Naive thymus-derived CD8-positive, alpha-beta T cell (primary cell): ENCODE measurements at regions of chr7 and their contacts with region 1.

Region 1: DNA sequence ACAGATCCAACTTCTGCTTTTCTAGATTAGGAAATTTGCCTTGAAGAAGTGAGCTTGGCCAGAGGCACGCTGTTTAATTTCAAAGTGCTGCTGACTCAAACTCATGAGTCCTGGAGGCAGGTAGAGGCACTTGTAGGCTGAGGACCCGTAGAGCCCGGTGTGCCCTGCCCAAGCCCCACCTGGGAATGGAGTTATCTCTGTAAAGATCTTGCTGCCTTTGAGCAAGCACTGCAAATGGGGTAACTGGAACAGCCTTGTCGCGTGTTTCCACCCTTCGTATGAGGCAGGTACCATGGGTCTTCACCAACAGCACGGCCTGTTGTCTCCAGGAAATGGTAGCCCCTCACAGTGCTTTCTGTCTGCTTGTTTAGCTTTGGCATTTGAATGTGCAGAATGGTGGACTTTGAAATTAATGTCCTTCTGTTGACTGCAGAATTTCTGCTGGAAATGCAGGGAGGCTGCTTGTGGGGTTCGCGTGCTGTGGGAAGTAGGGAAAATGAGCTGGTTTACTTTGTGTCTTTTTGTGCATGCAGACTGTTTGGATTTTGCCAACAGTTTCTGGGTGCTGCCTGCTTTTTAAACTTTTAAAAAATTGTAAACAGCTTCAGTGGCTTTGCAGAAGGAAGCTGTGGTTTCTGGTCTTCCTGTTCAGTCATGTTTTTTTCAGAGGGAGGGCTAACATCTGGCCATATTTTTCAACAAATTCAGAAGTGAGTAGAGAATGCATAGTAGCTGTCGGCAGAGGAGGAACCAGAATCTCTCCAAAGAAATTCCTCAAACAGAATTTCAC is 27.2 kb downstream of the CCM2 start:
- DNase-seq: peak in 9 of 10 donors; percentile 12 to 78 (median 44)
- ATAC-seq: peak; percentile 64 to 66
- H3K4me3 Mint-ChIP-seq: peak overlapping the region; percentile 88 to 97 (median 93)
- H3K27ac Mint-ChIP-seq: peak overlapping the region; percentile 89 to 99 (median 92)
- H3K4me1 Mint-ChIP-seq: peaks cover 21 to 72% (median 60%) of the 10 kb centered on the region in 4 donors
- H3K27me3 Mint-ChIP-seq: no peaks in the 10 kb centered on the region

Region 2: DNA sequence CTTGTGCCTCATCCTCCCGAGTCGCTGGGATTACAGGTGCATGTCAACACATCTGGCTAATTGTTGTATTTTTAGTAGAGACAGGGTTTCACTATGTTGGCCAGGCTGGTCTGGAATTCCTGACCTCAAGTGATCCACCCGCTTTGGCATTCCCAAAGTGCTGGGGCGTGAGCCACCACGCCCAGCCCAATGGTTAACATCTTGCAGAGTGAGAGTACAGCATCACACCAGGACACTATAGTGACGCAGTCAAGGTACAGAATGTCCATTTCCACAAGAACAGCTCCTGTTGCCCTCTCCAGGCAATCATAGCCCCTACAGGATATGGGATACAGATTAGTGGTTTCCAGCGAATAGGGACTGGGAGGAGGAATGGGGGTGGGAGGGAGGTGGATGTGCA is 82.4 kb before region 1 on chr7:
- POLR2A ChIA-PET with region 1: no interaction called
- DNase-seq: no peak
- ATAC-seq: no peak
- H3K4me3 Mint-ChIP-seq: no peak overlapping the region
- H3K27ac Mint-ChIP-seq: no peak overlapping the region
- H3K4me1 Mint-ChIP-seq: no peaks in the 10 kb centered on the region
- H3K27me3 Mint-ChIP-seq: peaks cover 0 to 3% (median 0%) of the 10 kb centered on the region in 5 donors

Region 3: DNA sequence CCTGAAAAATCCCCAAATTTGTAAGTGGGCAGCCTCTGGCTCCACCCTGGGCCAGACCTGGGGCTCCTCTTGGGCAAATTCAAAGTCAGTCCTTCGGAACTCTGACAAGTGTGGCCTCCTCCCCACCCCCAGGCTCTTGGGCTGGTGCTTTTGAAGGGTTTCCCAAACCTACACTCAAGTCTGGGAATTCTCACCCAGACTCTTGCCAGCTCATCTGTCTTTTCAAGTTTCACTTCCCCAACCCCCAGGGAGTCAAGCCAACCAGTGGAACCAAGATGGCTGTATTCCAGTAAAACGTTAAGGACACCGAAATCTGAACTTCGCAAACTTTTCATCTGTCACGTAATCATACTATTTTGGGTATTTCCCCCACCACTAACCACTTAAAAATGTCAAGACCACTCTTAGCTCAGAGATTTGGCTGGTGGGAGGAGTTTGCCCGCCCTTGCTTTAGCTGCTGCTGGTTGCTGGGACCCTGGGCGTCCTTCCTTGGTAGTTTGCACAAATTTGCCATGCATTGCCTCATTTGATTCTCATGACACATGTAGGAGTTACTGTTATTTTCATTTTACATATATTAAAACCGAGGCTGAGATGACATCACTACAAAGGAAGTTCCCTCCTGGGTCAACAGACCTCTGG is 46.7 kb before region 1 on chr7:
- POLR2A ChIA-PET with region 1: interaction called, 207 read pairs
- DNase-seq: peak in 9 of 10 donors; percentile 21 to 71 (median 53)
- ATAC-seq: peak; percentile 29 to 39
- H3K4me3 Mint-ChIP-seq: peak overlapping the region; percentile 32 to 99 (median 94)
- H3K27ac Mint-ChIP-seq: peak overlapping the region; percentile 78 to 98 (median 94)
- H3K4me1 Mint-ChIP-seq: peaks cover 35 to 88% (median 82%) of the 10 kb centered on the region in 4 donors
- H3K27me3 Mint-ChIP-seq: no peaks in the 10 kb centered on the region

Region 4: DNA sequence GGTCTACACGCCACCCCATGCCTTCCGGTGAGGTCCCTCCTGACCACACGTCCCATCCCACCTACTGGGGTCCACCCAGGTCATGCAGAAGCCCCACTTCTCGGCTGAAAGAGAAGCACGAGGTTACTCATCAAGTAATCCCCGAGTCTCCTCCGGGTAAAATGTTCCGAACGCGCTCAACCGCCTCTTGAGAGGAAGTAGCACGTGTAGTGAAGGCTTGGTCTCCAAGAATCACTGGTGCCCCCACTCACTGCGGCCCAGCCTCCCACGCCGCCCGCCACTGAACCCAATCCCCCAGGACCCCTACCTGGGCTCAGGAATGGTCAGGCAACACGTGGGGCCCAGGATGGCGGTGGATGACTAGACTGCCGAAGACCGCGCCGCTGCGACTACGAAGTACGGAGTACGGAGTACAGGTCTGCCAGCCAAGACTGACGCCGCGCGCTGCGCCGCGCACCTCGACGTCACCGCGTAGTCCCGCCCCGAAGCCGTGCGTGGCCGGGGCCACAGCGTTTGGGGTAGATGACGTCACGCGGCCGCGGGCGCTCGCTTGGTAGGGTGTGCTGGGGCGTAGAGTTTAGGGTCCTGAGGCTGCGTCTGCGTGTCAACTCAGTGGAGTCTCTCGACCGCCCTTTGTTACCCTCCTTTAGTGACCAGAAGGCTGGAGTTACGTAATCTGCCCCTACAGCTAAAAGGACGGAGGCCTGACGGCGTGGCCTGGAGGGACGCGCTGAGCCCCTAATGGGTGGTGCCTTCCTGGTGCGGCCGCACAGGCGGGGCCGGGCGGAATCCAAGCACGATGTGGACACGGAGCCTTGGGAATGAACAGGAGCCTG is 40.7 kb before region 1 on chr7:
- POLR2A ChIA-PET with region 1: interaction called, 207 read pairs
- DNase-seq: peak; percentile 90 to 97 (median 94)
- ATAC-seq: peak; percentile 93 to 95
- H3K4me3 Mint-ChIP-seq: peak overlapping the region; percentile 93 to 99 (median 98)
- H3K27ac Mint-ChIP-seq: peak overlapping the region; percentile 95 to 100 (median 99)
- H3K4me1 Mint-ChIP-seq: peaks cover 27 to 61% (median 54%) of the 10 kb centered on the region in 4 donors
- H3K27me3 Mint-ChIP-seq: no peaks in the 10 kb centered on the region

Region 5: DNA sequence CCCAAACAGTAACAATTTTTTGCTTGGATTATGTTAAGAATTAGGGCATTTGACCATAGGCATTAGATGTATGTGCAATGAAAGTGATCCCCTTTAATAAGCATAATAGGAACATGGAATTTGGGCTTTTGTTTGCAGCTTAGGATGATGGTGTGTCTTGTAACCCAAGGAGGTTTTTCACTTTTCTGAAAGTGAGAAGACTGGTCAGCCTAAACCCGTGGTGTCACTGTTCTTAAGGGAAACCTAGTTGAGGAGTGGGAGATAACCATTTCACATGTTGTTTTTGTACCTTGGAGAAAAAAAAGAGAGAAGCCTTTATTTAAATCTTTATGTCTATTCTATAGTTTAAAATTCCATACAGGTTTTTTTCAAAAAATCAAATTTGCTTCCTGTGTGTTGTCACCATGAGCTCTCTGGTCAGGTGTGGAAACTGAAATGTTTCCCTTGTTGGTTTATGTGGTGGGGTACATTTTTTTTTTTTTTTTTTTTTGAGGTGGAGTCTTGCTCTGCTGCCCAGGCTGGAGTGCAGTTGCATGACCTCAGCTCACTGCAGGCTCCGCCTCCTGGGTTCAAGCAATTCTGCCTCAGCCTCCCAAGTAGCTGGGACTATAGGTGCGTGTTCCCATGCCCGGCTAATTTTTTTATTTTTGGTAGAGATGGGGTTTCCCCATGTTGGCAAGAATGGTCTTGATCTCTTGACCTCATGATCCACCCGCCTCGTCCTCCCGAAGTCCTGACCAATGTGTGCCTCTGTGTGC is 19.4 kb before region 1 on chr7:
- POLR2A ChIA-PET with region 1: interaction called, 314 read pairs
- DNase-seq: no peak
- ATAC-seq: peak in 1 of 2 donors; percentile 49
- H3K4me3 Mint-ChIP-seq: peak overlapping the region in 2 of 10 donors; percentile 24 to 48
- H3K27ac Mint-ChIP-seq: peak overlapping the region in 7 of 10 donors; percentile 9 to 74 (median 43)
- H3K4me1 Mint-ChIP-seq: peaks cover 18 to 66% (median 51%) of the 10 kb centered on the region in 4 donors
- H3K27me3 Mint-ChIP-seq: no peaks in the 10 kb centered on the region

Region 6: DNA sequence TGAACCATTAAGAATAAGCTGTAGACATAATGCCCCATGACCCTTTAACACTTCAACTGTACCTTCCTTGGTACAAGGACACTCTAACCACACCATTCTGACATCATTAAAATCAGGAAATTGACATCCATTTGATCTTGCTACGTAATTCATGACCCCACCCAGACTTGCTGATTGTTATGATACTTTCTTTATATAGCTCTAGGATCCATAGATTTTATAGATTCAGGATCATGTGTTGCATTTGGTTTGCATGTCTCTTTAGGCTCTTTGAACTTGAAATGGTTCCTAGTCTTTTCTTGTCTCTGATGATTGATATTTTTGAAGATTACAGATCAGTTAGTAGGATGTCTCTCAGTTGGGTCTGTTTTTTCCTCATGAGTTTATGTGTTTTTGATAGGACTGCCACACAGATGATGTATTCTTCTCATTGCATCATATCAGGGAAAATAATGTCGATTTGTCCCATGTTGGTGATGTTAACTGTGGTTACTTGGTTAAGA is 13.7 kb before region 1 on chr7:
- POLR2A ChIA-PET with region 1: interaction called, 18 read pairs
- DNase-seq: peak in 4 of 10 donors; percentile 22 to 67 (median 46)
- ATAC-seq: peak; percentile 65 to 89
- H3K4me3 Mint-ChIP-seq: peak overlapping the region in 7 of 10 donors; percentile 0 to 31 (median 9)
- H3K27ac Mint-ChIP-seq: peak overlapping the region in 9 of 10 donors; percentile 49 to 93 (median 86)
- H3K4me1 Mint-ChIP-seq: peaks cover 26 to 37% (median 32%) of the 10 kb centered on the region in 4 donors
- H3K27me3 Mint-ChIP-seq: no peaks in the 10 kb centered on the region